Right lobe of liver (tissue), 6 donors: ENCODE measurements at regions of chr4 and their contacts with region 1.

Region 1: DNA sequence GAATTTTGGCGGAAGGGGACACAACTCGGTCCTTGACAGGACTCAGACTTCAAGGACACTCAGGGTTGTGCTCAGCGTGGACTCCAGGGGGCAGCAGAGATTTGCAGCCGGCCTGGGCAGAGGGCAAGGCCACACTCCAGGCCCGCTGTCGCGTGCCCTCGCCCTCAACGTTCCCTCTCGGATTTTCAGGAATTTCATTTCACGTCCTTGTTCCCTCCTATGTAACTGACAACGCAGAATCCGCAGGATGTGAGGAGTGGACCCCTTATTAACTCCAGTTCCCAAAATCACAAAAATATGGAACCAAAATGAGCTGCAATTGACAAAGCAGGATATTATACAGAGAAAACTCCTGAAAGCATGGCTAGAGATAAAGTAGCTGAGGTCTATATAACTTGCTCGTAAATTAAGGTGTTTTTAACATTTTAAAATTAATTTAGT is 21.0 kb upstream of the DCTD start:
- DNase-seq: peak; percentile 76 to 82 (median 80)
- ATAC-seq: peak; percentile 100
- H3K4me3 ChIP-seq: no peak overlapping the region
- H3K27ac ChIP-seq: no peak overlapping the region
- H3K4me1 ChIP-seq: peaks cover 0 to 5% (median 2%) of the 10 kb centered on the region in 4 donors
- H3K27me3 ChIP-seq: no peaks in the 10 kb centered on the region
- CTCF ChIP-seq: peak; percentile 87 to 97 (median 94)
- POLR2A ChIP-seq: no peak

Region 2: GRCh38 chr4:183059797-183060196 is 121.6 kb after region 1 on chr4:
- intact Hi-C with region 1: loop called in 1 of 2 experiments (anchors 10 kb)
- DNase-seq: no peak
- ATAC-seq: no peak
- H3K4me3 ChIP-seq: no peak overlapping the region
- H3K27ac ChIP-seq: no peak overlapping the region
- H3K4me1 ChIP-seq: peaks cover 0 to 4% (median 0%) of the 10 kb centered on the region in 4 donors
- H3K27me3 ChIP-seq: no peaks in the 10 kb centered on the region
- CTCF ChIP-seq: no peak
- POLR2A ChIP-seq: no peak

Region 3: DNA sequence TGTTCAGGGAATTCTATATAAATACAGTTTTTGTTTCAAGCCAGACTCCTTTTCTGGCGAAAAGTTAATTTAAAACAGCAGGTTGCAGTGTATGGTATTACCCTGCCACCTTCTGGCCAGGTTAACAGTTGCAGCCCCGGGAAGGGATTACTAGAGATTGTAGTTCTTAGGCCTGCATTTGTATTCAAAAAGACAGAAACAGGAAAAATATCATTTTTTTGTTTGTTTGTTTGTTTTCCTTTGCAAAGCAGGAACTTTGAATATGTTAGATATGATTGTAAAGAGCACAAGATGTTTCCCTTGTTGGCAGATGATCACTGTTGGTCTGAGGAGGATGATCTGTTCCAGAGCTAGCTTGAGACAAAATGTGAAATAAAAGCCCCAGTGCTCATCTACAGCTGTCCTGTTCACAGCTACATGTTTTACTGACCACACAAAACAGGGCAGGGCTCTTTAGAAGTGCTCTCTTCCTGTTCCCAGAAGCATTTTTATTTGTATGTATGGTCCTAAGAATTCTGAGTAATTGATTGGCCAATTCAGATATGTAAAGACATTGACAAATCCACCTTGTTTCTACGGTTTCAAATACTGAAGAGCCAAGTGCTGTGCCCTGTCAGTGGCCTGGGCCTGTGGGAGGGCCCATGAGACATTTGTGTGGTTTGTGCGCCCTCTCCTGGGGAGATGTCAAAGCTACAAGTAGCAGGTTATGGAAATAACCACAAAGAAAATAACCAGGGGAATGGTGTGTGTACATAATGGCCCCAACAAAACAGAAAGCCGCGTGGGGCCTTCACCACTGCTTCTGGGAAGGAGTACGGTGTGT is 323.9 kb after region 1 on chr4:
- intact Hi-C with region 1: loop called in 1 of 2 experiments (anchors 5 kb)
- DNase-seq: peak; percentile 77 to 88 (median 81)
- ATAC-seq: peak; percentile 87 to 92 (median 91)
- H3K4me3 ChIP-seq: peak overlapping the region in 2 of 3 donors; percentile 19 to 39
- H3K27ac ChIP-seq: peak overlapping the region; percentile 25 to 72 (median 69)
- H3K4me1 ChIP-seq: peaks cover 0 to 35% (median 5%) of the 10 kb centered on the region in 4 donors
- H3K27me3 ChIP-seq: no peaks in the 10 kb centered on the region
- CTCF ChIP-seq: peak; percentile 78 to 94 (median 80)
- POLR2A ChIP-seq: no peak

Region 4: GRCh38 chr4:183398227-183399125 is 460.3 kb after region 1 on chr4:
- intact Hi-C with region 1: loop called in 1 of 2 experiments (anchors 5 kb)
- DNase-seq: peak; percentile 76 to 82 (median 79)
- ATAC-seq: peak; percentile 95 to 98 (median 97)
- H3K4me3 ChIP-seq: peak overlapping the region; percentile 36 to 57 (median 55)
- H3K27ac ChIP-seq: peak overlapping the region in 2 of 3 donors; percentile 20 to 45
- H3K4me1 ChIP-seq: peaks cover 0 to 5% (median 0%) of the 10 kb centered on the region in 4 donors
- H3K27me3 ChIP-seq: no peaks in the 10 kb centered on the region
- CTCF ChIP-seq: peak; percentile 50 to 73 (median 64)
- POLR2A ChIP-seq: no peak